Activated CD8-positive, alpha-beta T cell treated with anti-CD3 and anti-CD28 coated beads, Interleukin-2, amount 10 ng/mL, durations not matched to agents 7 days and 5 days (primary cell): ENCODE measurements at regions of chr1 and their contacts with region 1.

Region 1: GRCh38 chr1:32536117-32536516 is 3.1 kb upstream of the ZBTB8A start:
- DNase-seq: no peak
- ATAC-seq: no peak
- H3K4me3 Mint-ChIP-seq: no peak overlapping the region
- H3K27ac Mint-ChIP-seq: no peak overlapping the region
- H3K4me1 Mint-ChIP-seq: peaks cover 8% of the 10 kb centered on the region
- H3K27me3 Mint-ChIP-seq: peaks cover 63% of the 10 kb centered on the region

Region 2: DNA sequence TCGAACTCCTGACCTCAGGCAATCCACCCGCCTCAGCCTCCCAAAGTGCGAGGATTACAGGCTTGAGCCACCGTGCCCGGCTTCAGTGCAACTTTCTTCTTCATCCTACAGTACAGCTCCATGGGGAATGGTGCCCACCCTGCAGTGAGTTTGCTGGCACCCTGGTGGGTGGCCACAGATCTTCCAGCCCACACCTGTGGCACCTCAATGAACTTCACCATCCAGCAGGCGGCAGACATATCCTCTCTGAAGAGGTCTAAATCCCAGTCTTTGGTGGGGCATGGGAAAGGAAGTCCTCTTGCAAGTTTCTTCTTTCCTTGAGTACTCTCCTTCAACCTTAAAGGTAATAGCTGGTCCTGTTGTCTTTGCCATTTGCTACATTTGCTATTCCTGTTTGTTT is 15.0 kb before region 1 on chr1:
- CTCF ChIA-PET with region 1: interaction called, 20 read pairs
- POLR2A ChIA-PET with region 1: interaction called, 3 read pairs
- DNase-seq: no peak
- ATAC-seq: no peak
- H3K4me3 Mint-ChIP-seq: peak overlapping the region; percentile 72
- H3K27ac Mint-ChIP-seq: no peak overlapping the region
- H3K4me1 Mint-ChIP-seq: peaks cover 3% of the 10 kb centered on the region
- H3K27me3 Mint-ChIP-seq: peaks cover 5% of the 10 kb centered on the region